Activated B cell treated with CpG ODN at 0.5 μM for 24 hours (primary cell): ENCODE measurements at regions of chr5 and their contacts with region 1.

Region 1: DNA sequence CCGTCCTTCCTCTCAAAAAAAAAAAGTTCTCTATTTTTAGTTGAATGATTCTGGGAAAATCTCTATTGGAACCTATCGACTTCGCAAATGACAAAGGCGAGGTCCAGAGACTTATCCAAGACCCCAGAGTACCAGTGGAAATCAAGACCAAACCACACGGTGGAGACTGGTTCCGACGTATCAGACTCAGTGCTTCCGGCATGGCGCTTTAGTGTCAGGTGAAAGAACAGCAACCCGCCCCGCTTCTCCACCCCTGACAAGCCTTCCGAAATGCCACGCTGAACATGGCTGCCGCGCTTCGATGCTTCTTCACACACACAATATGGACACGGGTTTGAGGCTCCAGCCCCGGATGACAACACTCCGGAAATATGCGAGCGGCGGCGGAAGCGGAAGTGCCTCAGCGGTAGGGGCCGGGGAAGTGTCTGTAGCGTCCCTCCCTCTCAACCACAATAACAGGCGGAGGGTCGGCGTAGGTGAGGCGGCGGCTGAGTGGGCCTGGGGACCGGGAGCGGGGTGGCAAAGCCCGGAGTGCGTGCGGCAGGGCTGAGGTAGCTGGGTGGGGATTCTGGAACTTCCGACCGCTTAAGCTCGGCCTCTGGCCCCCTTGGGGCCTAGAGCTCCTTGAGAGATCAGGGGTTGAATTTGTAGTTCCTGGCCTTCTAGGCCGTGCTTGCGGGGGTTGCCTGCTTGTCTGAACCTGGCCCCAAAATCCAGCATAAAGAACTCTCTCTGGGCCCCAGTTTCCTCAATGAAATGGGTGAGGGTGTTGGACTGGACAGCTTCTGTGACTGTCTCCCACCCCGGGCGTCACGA is at the start of gene FBXO38:
- DNase-seq: peak; percentile 92
- ATAC-seq: peak; percentile 97
- H3K4me3 Mint-ChIP-seq: peak within 1 kb of the TSS; percentile 97
- H3K27ac Mint-ChIP-seq: peak within 1 kb of the TSS; percentile 99
- H3K4me1 Mint-ChIP-seq: peaks cover 50% of the 10 kb centered on the region
- H3K27me3 Mint-ChIP-seq: no peaks in the 10 kb centered on the region
- CTCF ChIP-seq: no peak
- total RNA-seq, gene FBXO38: 62.8 and 81.9 TPM in 2 replicates

Region 2: GRCh38 chr5:147782110-147783028 is 601.4 kb before region 1 on chr5 and contains the start of gene JAKMIP2:
- CTCF ChIA-PET with region 1: no interaction called
- POLR2A ChIA-PET with region 1: no interaction called
- intact Hi-C with region 1: loop called (anchors 10 kb)
- DNase-seq: peak; percentile 63
- ATAC-seq: peak; percentile 99
- H3K4me3 Mint-ChIP-seq: peak within 1 kb of the TSS; percentile 80
- H3K27ac Mint-ChIP-seq: peak within 1 kb of the TSS; percentile 76
- H3K4me1 Mint-ChIP-seq: peaks cover 15% of the 10 kb centered on the region
- H3K27me3 Mint-ChIP-seq: no peaks in the 10 kb centered on the region
- CTCF ChIP-seq: no peak
- total RNA-seq, gene JAKMIP2: 2.0 and 3.1 TPM in 2 replicates

Region 3: DNA sequence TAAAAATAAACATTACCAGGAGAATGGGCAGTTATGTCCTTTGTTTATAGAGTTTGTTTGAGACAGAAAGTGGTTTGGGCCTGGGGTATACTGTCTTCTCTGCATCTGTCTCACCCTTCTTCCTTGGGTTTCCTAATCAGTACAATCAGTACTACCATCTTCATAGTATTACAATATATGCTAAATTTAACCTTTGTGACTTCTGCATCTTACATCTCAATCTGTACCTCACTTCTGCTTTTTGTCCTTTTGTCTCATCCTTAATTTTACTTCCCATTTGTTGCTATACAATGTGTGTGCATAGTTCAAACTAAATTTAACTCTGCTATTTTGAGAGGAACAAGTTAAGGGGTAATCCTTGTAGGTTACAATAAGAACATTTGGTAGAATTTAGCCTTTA is 19.6 kb after region 1 on chr5:
- CTCF ChIA-PET with region 1: interaction called, 3 read pairs
- POLR2A ChIA-PET with region 1: interaction called, 9 read pairs
- intact Hi-C with region 1: loop called (anchors 1 kb)
- DNase-seq: no peak
- ATAC-seq: peak; percentile 75
- H3K4me3 Mint-ChIP-seq: peak overlapping the region; percentile 4
- H3K27ac Mint-ChIP-seq: peak overlapping the region; percentile 5
- H3K4me1 Mint-ChIP-seq: peaks cover 35% of the 10 kb centered on the region
- H3K27me3 Mint-ChIP-seq: no peaks in the 10 kb centered on the region
- CTCF ChIP-seq: no peak

Region 4: DNA sequence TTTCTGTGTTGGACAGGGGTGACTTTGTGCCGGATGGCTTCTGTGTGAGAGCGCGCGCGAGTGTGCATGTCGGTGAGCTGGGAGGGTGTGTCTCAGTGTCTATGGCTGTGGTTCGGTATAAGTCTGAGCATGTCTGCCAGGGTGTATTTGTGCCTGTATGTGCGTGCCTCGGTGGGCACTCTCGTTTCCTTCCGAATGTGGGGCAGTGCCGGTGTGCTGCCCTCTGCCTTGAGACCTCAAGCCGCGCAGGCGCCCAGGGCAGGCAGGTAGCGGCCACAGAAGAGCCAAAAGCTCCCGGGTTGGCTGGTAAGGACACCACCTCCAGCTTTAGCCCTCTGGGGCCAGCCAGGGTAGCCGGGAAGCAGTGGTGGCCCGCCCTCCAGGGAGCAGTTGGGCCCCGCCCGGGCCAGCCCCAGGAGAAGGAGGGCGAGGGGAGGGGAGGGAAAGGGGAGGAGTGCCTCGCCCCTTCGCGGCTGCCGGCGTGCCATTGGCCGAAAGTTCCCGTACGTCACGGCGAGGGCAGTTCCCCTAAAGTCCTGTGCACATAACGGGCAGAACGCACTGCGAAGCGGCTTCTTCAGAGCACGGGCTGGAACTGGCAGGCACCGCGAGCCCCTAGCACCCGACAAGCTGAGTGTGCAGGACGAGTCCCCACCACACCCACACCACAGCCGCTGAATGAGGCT is 442.4 kb after region 1 on chr5 and contains the start of gene ADRB2:
- CTCF ChIA-PET with region 1: no interaction called
- POLR2A ChIA-PET with region 1: no interaction called
- intact Hi-C with region 1: loop called (anchors 2 kb)
- DNase-seq: peak; percentile 84
- ATAC-seq: peak; percentile 89
- H3K4me3 Mint-ChIP-seq: peak within 1 kb of the TSS; percentile 89
- H3K27ac Mint-ChIP-seq: peak within 1 kb of the TSS; percentile 98
- H3K4me1 Mint-ChIP-seq: peaks cover 75% of the 10 kb centered on the region
- H3K27me3 Mint-ChIP-seq: no peaks in the 10 kb centered on the region
- CTCF ChIP-seq: no peak
- total RNA-seq, gene ADRB2: 3.2 TPM in 2 replicates

Region 5: GRCh38 chr5:149551200-149552037 is 1167.6 kb after region 1 on chr5 and contains the start of gene CSNK1A1:
- CTCF ChIA-PET with region 1: no interaction called
- POLR2A ChIA-PET with region 1: no interaction called
- intact Hi-C with region 1: loop called (anchors 1 kb)
- DNase-seq: peak; percentile 98
- ATAC-seq: peak; percentile 79
- H3K4me3 Mint-ChIP-seq: peak within 1 kb of the TSS; percentile 92
- H3K27ac Mint-ChIP-seq: peak within 1 kb of the TSS; percentile 96
- H3K4me1 Mint-ChIP-seq: peaks cover 36% of the 10 kb centered on the region
- H3K27me3 Mint-ChIP-seq: no peaks in the 10 kb centered on the region
- CTCF ChIP-seq: no peak
- total RNA-seq, gene CSNK1A1: 120 and 133 TPM in 2 replicates